OCI-LY7 (cell line): ENCODE measurements at regions of chrX and their contacts with region 1.

Region 1: DNA sequence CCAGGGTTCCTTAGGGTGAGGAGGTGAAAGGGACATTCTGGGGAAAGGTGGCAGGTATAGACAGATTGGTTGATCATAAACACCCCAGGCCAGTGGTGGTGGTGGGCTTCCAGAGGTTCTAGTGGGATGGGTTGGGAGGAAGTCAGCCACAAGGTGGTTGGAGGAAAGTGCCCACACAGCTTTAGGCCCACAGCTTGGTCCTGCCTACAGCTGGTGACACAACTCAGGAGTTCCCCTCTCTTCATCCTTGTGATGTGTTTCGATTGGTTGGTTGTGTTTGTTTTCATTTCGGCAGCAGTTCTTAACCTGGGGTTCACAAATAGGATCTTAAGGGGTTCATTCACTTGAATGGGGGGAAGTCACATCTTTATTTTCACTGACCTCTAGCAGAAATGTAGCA is 157.0 kb downstream of the TMEM164 start:
- DNase-seq: no peak
- H3K4me3 ChIP-seq: no peak overlapping the region
- H3K27ac ChIP-seq: no peak overlapping the region
- H3K4me1 ChIP-seq: peaks cover 7% of the 10 kb centered on the region
- CTCF ChIP-seq: no peak

Region 2: GRCh38 chrX:110055616-110056015 is 104.2 kb before region 1 on chrX:
- CTCF ChIA-PET with region 1: no interaction called
- POLR2A ChIA-PET with region 1: no interaction called
- intact Hi-C with region 1: no loop called
- DNase-seq: no peak
- H3K4me3 ChIP-seq: no peak overlapping the region
- H3K27ac ChIP-seq: no peak overlapping the region
- H3K4me1 ChIP-seq: no peaks in the 10 kb centered on the region
- CTCF ChIP-seq: no peak

Region 3: DNA sequence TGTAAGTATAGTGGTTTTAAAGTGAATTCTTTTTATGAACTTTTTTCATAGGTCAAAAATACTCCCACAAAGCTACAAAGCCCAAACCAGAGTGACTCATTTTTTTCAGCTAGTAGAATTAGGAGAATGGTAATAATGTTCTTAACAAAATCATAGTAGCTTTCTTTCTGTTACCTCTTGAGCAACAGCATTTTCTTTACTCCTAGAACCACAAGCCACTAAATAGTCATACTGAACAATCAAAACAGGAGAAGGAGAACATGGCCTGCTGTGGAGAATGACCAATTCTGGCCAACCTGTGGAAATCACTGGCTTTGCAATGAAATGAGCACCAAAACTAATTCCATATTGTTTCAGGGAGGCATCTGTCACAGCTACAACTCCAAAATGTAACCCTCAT is 45.1 kb after region 1 on chrX:
- CTCF ChIA-PET with region 1: no interaction called
- POLR2A ChIA-PET with region 1: no interaction called
- intact Hi-C with region 1: no loop called
- DNase-seq: no peak
- H3K4me3 ChIP-seq: no peak overlapping the region
- H3K27ac ChIP-seq: no peak overlapping the region
- H3K4me1 ChIP-seq: no peaks in the 10 kb centered on the region
- CTCF ChIP-seq: no peak

Region 4: GRCh38 chrX:110407910-110408545 is 248.2 kb after region 1 on chrX:
- CTCF ChIA-PET with region 1: interaction called, 7 read pairs
- POLR2A ChIA-PET with region 1: interaction called, 5 read pairs
- intact Hi-C with region 1: loop called (anchors 1 kb)
- DNase-seq: peak; percentile 53
- H3K4me3 ChIP-seq: no peak overlapping the region
- H3K27ac ChIP-seq: no peak overlapping the region
- H3K4me1 ChIP-seq: no peaks in the 10 kb centered on the region
- CTCF ChIP-seq: peak; percentile 78

Region 5: GRCh38 chrX:110412971-110413721 is 253.3 kb after region 1 on chrX:
- CTCF ChIA-PET with region 1: interaction called, 7 read pairs
- POLR2A ChIA-PET with region 1: interaction called, 4 read pairs
- intact Hi-C with region 1: loop called (anchors 1 kb)
- DNase-seq: peak; percentile 69
- H3K4me3 ChIP-seq: no peak overlapping the region
- H3K27ac ChIP-seq: no peak overlapping the region
- H3K4me1 ChIP-seq: peaks cover 3% of the 10 kb centered on the region
- CTCF ChIP-seq: peak; percentile 81